Head of caudate nucleus (tissue), 42 donors: ENCODE measurements at regions of chr13 and their contacts with region 1.

Region 1: DNA sequence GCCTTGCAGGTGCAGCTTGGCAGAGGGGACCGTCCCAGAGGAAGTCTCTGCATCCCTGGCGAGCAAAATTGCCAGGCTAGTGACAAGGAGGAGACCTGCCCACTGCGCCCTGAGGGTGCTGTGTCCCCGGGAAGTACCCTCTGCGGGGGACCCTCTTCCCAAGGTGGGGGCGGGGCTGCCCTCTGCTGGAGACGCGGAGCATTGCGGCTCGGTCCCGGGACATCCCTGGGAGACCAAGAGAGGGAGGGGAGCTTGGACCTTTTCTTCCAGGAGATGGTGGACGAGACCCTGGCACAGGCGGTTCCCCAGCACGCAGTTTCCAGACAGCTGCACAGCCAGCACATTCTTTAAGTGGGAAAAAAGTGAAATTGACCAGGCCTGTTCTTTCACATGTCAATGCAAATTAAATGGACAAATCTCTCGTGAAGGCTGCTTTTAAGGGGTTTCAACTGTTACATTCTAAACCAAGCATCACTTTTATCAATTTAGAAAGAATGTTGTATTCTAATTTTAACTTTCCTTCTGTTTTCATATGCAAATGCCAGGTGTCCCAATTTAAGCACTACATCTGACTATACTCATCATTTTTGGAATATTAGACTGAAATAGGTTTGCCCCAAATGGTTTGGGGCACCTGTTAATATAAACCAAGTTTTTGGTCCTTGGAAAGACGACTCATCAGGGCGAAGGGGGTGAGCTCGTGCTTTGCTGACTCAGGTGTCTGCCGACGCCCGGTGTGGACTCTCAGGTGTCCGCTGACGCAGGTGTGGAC is 60.7 kb downstream of the MCF2L start:
- DNase-seq: peak in 34 of 42 donors; percentile 41 to 86 (median 68)

Region 2: DNA sequence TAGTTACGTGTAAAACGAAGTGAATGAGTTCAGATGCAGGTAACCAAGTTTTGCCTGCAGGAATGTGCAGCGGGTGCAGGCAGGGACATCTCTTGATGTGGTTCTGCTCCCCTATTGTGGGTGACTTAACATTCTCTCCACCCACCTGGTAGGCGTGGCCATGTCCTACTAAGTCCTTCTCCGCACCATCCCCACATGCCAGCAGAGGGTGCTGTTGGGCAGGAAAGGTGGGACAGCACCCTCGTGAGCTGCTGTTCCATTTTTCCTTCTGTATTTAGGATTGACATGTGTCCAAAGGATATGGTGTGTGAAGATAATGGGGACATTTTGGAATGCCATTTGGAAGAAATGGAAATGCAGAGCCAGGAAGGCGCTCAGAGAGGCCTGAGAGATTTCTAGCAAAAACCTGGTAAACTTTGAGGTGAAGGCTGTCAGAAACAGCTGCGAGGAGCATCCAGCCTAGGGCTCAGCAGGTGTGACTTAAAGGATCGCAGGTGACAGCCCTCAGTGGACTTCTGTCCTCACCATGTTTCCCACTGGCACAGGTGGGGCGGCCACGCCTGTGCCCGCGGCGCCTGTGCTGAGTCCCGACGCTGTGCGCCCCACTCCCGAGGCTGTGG is 86.9 kb before region 1 on chr13:
- intact Hi-C with region 1: loop called (anchors 2 kb)
- DNase-seq: peak; percentile 91 to 99 (median 97)